AG04450 (cell line): ENCODE measurements at regions of chr9 and their contacts with region 1.

Region 1: GRCh38 chr9:36407122-36407723 is 7.2 kb upstream of the RNF38 start:
- DNase-seq: no peak
- H3K4me3 ChIP-seq: no peak overlapping the region
- H3K27ac ChIP-seq: no peak overlapping the region
- H3K27me3 ChIP-seq: no peaks in the 10 kb centered on the region
- CTCF ChIP-seq: peak; percentile 91

Region 2: DNA sequence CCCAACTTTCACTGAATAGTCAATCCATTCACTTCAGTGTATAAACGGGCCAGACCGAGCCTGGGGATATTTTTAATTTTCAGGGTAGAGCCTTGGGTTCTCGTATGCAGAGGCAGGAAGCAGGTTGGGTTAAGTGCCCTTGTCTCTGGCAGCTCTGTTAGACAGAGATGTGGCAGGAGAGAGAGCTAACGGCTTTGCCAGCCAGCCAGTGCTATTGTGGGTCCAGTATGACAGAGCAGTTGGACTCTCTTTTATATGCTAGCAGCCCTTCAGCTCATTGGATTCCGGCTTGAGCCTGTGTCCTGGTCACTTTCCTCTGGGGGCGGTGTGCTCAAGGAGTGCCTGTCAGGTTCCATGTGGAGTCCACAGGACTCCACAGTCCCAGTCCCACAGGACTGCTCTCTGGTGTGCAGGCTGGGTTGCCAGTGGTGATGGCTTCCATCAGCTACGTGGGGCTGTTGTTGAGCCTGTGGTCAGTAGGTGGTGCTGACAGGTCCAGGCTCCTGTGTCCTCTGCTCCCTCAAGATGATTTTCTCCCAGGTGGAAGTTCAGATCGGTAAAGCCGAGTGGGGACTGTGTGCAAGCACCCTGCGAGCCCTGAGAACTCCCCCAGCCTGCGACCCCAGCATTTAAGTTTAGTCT is 202.2 kb before region 1 on chr9:
- CTCF ChIA-PET with region 1: no interaction called
- POLR2A ChIA-PET with region 1: no interaction called
- DNase-seq: no peak
- H3K4me3 ChIP-seq: no peak overlapping the region
- H3K27ac ChIP-seq: no peak overlapping the region
- H3K27me3 ChIP-seq: no peaks in the 10 kb centered on the region
- CTCF ChIP-seq: peak; percentile 31

Region 3: GRCh38 chr9:36268007-36268427 is 139.2 kb before region 1 on chr9:
- CTCF ChIA-PET with region 1: no interaction called
- POLR2A ChIA-PET with region 1: no interaction called
- DNase-seq: no peak
- H3K4me3 ChIP-seq: no peak overlapping the region
- H3K27ac ChIP-seq: no peak overlapping the region
- H3K27me3 ChIP-seq: no peaks in the 10 kb centered on the region
- CTCF ChIP-seq: no peak

Region 4: DNA sequence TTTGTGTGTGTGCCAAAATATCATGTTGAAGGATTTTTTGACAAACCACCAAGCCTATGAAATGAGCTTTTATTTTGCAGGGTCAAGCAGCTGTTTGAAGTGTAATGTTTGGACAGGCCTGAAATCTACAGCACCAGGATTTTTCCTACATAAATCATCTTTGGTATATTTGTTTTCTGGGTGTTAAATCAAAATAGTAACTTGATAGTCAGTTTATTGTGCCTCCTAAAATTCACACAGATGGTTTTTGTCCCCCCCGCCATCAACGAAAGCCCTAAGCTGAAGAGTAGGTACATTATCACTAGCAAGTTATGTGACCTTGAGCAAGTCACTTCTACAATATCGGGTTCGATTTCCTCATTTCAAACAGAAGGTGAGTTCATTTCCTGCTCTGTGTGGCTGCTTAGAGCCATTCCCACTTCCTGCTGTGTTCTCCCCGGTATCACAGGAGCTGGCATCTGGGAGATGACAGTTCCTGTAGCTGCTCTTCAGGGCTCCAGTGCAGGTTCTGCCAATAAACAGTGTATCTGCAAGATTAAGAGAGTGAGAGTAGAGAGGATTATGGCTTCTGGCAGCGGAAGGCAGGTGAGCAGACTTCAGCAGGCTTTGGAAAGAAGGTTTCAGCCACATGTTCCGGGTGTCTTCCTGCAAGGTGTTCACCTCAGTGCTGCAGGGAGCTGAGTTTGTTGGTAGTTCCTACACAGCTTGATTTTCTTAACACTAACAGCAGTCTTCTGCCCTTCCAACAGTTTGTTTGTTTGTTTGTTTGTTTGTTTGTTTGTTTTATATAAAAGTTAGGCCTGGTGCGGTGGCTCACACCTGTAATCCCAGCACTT is 100.5 kb before region 1 on chr9:
- CTCF ChIA-PET with region 1: no interaction called
- POLR2A ChIA-PET with region 1: no interaction called
- DNase-seq: no peak
- H3K4me3 ChIP-seq: no peak overlapping the region
- H3K27ac ChIP-seq: no peak overlapping the region
- H3K27me3 ChIP-seq: no peaks in the 10 kb centered on the region
- CTCF ChIP-seq: no peak

Region 5: GRCh38 chr9:36392489-36392888 is 14.7 kb before region 1 on chr9:
- CTCF ChIA-PET with region 1: interaction called, 12 read pairs
- POLR2A ChIA-PET with region 1: no interaction called
- DNase-seq: no peak
- H3K4me3 ChIP-seq: no peak overlapping the region
- H3K27ac ChIP-seq: no peak overlapping the region
- H3K27me3 ChIP-seq: no peaks in the 10 kb centered on the region
- CTCF ChIP-seq: no peak

Region 6: GRCh38 chr9:36436909-36437308 is 29.7 kb after region 1 on chr9:
- CTCF ChIA-PET with region 1: interaction called, 21 read pairs
- POLR2A ChIA-PET with region 1: no interaction called
- DNase-seq: no peak
- H3K4me3 ChIP-seq: no peak overlapping the region
- H3K27ac ChIP-seq: no peak overlapping the region
- H3K27me3 ChIP-seq: no peaks in the 10 kb centered on the region
- CTCF ChIP-seq: no peak

Region 7: DNA sequence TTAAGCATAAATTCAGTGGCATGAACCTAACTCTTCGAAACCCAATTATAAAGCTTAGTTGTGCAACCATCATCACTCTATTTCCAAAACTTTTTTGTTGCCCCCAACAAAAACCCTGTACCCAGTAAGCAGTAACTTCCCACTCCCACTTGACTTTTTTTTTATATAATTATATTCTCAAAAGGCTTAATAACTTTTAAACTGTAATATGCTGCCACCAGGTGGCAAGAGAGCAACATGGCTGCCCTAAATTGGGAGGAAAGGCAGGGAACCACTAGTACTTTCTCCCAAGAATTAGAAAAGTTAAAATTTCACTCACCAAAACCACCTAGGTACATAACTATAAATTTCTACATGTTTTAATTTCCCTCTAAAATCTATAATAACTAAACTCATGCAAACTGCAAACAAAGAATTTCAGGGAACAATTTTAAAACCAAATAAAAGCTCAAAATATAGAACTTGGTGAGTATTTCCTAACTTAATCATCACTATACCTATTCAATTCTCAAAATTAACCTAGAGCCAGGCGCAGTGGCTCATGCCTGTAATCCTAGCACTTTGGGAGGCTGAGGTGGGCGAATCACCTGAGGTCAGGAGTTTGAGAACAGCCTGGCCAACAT is 43.0 kb after region 1 on chr9:
- CTCF ChIA-PET with region 1: interaction called, 189 read pairs
- POLR2A ChIA-PET with region 1: interaction called, 3 read pairs
- DNase-seq: peak; percentile 18
- H3K4me3 ChIP-seq: no peak overlapping the region
- H3K27ac ChIP-seq: no peak overlapping the region
- H3K27me3 ChIP-seq: no peaks in the 10 kb centered on the region
- CTCF ChIP-seq: peak; percentile 78

Region 8: DNA sequence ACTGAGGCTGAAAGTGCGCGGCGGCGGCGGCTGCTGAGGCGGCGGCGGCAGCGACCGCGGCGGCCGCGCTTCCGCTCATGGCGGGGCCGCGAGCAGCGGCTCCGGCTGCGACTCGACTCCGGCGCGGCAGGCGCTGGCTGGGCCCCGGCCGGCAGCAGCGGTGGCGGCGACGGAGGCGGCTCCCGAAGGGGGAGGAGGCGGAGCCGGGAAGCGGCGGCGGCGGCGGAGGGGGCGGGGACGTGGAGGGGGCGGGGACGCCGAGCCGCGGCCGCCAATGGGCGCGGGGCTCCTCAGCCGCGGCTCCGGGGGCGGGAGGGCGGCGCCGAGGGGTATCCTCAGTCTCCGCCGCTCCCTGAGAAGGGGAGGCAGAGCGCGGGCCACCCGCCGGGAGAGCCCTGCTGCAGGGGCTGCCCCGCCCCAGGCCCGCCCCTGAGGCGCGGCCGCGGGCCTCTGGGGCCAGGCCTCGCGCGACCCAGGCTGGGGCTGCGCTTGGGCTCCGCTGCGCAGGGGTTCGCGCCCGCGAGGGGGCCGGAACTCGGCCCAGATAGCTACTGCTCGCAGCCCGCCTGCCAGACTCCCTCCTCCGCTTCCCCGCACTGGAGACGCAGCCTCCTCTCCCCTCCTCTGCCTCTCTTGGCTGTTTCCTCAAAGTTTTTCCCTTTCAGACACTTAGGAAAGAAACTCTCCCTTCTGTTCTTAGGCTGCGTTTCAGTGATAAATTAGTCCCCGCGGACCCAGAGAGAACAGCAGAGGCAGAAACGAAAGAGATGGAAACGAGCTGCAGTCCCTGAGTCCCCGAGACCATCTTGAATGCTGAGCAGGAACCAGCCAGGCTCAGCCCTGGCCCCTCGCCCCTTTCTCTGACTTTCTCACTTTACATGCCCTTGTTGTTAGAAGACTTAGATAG is 80.5 kb after region 1 on chr9:
- CTCF ChIA-PET with region 1: interaction called, 21 read pairs
- POLR2A ChIA-PET with region 1: interaction called, 4 read pairs
- DNase-seq: peak; percentile 72
- H3K4me3 ChIP-seq: peak overlapping the region; percentile 93
- H3K27ac ChIP-seq: peak overlapping the region; percentile 92
- H3K27me3 ChIP-seq: no peaks in the 10 kb centered on the region
- CTCF ChIP-seq: 0 out of 2 replicates have a peak, but pooled peaks have one; percentile 3

Region 9: GRCh38 chr9:36530224-36530623 is 123.0 kb after region 1 on chr9:
- CTCF ChIA-PET with region 1: no interaction called
- POLR2A ChIA-PET with region 1: no interaction called
- DNase-seq: no peak
- H3K4me3 ChIP-seq: no peak overlapping the region
- H3K27ac ChIP-seq: no peak overlapping the region
- H3K27me3 ChIP-seq: peaks cover 2% of the 10 kb centered on the region
- CTCF ChIP-seq: no peak

Region 10: DNA sequence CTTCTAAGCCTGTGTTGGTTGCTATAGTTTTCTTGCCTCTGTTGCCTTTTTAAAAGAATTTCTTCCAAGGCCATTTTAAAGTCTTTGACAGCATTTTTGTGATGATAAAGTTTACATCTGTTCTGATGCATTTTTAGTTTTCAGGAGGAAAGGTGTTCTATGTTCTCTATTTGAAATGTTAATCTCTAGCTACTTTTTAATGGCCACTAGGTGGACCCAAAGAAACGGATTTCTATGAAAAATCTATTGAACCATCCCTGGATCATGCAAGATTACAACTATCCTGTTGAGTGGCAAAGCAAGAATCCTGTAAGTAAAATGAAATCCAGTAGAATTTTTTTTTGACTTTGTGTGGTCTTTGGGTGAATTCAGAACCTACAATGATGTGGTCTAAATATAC is 225.7 kb after region 1 on chr9:
- CTCF ChIA-PET with region 1: interaction called, 12 read pairs
- POLR2A ChIA-PET with region 1: no interaction called
- DNase-seq: peak; percentile 10
- H3K4me3 ChIP-seq: no peak overlapping the region
- H3K27ac ChIP-seq: no peak overlapping the region
- H3K27me3 ChIP-seq: no peaks in the 10 kb centered on the region
- CTCF ChIP-seq: peak; percentile 60